ENCODE measurements at regions of chr7 and their contacts with region 1.

Region 1: GRCh38 chr7:98021588-98022351 is 31.8 kb upstream of the OCM2 start:
- DNase-seq: peak; percentile 73
- H3K4me3 ChIP-seq: no peak overlapping the region
- H3K27ac ChIP-seq: no peak overlapping the region
- H3K4me1 ChIP-seq: no peaks in the 10 kb centered on the region
- CTCF ChIP-seq: peak; percentile 94

Region 2: DNA sequence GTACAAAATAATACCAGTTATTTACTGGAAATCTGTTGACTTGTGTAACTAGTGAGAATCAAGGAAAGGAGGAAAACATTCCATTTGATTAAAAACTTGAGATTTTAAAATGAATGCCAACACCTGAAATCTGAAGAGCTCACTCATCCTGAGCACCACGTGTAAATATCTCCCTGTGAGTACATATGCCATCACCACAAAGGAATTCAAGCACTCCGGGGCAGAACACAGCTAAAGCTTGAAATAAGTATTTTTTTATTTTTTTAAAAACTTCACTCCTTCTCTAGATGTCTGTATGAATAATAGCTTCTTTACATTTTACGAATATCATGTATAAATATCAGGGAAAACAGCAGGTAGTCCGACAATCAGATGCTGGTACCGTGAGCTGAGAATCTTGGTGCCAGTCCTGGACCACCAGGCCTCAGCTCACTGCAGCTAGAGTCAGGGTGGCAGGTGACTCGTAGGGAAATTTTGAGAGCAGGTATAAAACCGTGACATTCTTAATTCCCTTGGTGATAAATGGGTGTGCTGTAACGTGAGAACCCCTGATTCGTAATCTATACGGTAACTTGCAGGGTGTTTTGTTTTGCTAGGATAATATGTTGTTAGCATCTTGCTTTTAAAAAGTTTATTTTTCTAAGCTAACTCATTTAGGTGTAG is 97.6 kb after region 1 on chr7:
- CTCF ChIA-PET with region 1: no interaction called
- POLR2A ChIA-PET with region 1: no interaction called
- intact Hi-C with region 1: no loop called
- DNase-seq: no peak
- H3K4me3 ChIP-seq: no peak overlapping the region
- H3K27ac ChIP-seq: no peak overlapping the region
- H3K4me1 ChIP-seq: no peaks in the 10 kb centered on the region
- CTCF ChIP-seq: no peak

Region 3: DNA sequence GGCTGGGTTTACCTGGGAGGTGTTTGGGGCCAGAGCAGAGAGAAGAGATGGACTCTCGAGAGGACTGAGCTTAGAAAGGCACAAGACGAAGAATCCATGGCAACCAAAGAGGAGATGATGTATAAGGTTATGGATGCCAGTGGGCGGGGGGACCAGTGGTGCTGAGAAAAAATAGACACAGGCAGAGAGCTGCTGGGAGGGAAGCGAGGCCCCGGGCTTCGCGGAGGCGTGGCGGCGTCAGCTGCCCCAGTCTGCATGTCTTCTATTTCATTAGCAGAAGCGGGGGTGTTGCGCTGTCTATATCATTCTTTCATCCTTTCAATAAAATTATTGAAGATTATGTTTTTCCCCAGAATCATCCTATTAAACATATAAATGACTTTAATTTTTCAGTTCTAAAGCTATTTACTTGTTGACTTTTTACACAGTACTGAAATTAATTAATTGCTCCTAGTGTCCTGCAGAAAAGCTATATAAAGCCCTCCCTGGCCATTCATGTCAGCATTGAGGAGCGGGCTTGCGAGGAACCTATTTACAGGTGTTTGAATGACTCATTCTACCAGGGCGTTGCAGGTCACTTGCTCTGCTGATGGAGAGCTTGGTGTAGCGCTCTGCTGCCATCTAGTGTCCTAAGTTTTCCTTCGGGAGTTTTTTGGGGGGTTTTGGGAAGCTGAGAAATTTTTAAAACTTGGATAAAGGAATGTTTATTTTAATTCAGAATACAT is 146.6 kb after region 1 on chr7:
- CTCF ChIA-PET with region 1: interaction called, 6 read pairs
- POLR2A ChIA-PET with region 1: interaction called, 3 read pairs
- intact Hi-C with region 1: loop called (anchors 1 kb)
- DNase-seq: peak; percentile 64
- H3K4me3 ChIP-seq: no peak overlapping the region
- H3K27ac ChIP-seq: no peak overlapping the region
- H3K4me1 ChIP-seq: no peaks in the 10 kb centered on the region
- CTCF ChIP-seq: peak; percentile 86

Measured in OCI-LY7 (cell line).